HAP-1 (cell line): ENCODE measurements at regions of chr3 and their contacts with region 1.

Region 1: DNA sequence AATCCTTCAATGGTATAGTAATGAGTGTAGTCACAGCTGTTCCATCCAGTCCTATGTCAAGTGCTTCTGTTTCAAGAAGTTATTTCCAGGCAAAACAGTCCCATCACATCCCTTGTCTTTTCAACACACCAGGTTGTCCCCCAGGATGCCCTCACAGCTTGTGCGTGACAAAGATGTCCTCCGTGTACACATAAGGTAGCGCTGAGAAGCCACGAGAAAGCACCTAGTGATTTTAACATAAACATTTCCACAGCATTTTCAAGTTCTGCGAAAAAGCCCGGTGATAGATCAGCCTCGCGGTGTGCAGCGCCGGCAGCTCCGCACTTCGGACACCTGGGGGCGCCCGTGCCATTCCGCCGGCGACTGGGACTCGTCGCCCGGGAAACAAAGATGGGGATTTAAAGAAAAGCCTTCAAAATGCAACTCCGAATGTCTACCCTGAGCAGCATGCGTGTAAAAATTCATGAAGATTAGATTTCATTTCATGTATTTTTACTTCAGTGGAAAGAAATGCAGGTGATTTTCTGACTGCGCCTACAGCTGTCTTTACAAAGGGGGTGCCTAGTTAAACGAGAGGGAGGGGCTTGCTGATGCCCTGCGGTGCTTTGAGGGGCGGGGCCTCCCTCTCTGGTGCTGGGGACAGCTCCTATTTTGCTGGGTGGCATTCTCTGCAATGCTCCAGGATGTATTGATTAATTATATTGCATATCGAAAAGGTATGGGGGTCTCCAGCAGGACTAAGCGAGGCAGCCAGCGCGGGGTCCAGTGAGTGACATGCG is 49.9 kb downstream of the KY start:
- DNase-seq: peak; percentile 54 to 87
- H3K4me3 ChIP-seq: no peak overlapping the region
- H3K4me1 ChIP-seq: no peaks in the 10 kb centered on the region
- H3K27me3 ChIP-seq: peaks cover 6% of the 10 kb centered on the region; the same call in 1 of the 2 replicates

Region 2: DNA sequence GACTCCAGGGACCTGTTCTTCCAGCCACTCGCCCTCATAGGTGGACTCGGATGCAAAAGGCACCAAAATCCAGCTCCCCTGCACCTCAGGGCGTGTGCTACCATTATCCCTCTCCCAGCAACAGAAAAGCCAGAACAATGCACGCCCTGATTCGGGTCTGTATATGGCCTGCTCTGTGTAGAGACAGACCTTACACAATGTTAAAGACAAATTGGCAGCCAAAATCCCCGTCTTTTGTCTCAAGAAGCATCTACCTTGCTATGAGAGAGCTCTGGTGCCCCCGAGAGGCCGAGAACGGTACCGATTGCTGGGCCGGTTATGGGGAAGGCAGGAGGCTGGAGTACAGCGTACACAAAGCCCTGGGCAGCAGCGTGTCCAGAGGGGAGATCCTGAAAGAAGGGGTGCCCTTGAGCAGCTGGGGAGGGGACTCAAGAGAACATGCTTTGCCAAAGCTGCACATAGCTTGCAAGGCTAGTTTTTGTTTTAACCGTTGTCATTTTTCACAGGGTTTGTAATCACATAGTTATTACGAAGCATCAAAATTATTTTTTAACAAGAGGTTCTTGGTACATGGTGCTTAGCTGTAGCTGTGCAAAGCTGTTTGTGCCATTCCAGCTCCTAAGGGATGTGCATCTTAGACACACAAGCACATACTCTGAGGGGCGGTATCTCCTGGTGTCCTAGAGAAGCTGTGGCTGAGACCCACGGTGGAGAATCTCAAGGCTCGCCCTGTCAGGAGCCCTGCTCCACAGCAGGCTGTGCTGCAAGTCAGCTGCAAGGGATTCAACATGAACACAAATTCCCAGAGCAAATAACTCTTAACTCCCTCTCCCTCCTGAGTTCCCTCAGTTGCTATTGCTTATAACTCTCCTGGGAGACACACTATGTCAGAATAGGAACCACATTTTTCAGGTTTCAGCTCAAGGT is 903.1 kb after region 1 on chr3:
- in situ Hi-C with region 1: loop called (anchors 25 kb)
- DNase-seq: peak; percentile 54 to 86
- H3K4me3 ChIP-seq: no peak overlapping the region
- H3K4me1 ChIP-seq: no peaks in the 10 kb centered on the region
- H3K27me3 ChIP-seq: no peaks in the 10 kb centered on the region; the same call in 1 of the 2 replicates

Region 3: DNA sequence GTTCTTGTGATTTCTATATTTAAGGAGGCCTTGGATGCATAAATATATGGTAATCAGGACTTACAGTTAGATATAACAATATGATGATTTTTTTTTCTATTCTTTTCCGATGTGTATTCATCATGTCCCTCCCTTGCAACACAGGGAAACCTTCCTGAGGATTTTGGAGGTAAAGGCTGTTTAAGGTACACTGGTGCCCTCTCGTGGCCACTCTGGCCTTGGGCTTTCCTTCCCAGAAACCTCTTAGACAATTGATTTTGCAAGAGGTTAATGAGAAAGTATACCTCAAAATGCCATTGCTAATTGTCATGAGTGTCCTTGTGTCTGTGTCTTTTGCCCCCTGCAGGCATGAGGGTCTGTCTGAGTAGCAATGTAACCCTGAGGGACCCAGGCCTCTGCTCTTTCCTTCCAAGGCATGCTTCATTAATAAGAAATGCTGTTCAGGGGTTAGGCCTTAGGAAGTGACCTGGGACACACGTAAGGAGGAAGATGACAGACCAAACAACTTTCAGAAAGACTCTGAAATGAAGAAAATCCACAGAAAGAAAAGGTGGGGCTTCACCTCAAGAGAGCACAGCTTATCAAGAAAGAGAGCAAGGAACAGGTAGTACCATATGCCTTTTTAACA is 1294.3 kb after region 1 on chr3:
- in situ Hi-C with region 1: loop called (anchors 25 kb)
- DNase-seq: peak; percentile 72 to 83
- H3K4me3 ChIP-seq: no peak overlapping the region
- H3K4me1 ChIP-seq: no peaks in the 10 kb centered on the region
- H3K27me3 ChIP-seq: no peaks in the 10 kb centered on the region